Right ventricle myocardium inferior (tissue), 1 donor: ENCODE measurements at regions of chr2 and their contacts with region 1.

Region 1: DNA sequence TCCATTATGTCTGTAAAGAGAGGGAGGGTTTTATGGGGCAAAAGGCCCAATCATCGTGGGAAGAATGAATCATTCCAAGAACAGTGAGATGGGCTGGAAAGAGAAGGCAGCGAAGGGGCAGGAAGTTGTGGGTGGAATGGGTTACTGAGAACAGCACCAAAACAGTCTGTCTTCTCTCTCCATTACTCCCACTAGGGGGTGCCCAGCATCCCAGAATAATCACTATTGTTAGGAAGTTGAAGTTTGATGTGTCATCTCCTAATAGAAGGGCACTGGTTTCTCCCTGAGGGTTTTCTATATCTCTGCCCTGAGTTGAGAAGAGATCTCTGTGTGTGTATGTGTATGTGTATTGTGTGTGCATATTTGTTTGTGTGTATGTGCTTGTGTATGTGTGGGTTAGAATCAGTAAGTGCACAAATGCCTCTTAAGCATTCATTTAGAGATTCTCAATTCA is 76.6 kb upstream of the MAP4K3 start:
- DNase-seq: no peak
- ATAC-seq: peak; percentile 46

Region 2: GRCh38 chr2:39568561-39569006 is 54.9 kb after region 1 on chr2:
- intact Hi-C with region 1: no loop called
- DNase-seq: no peak
- ATAC-seq: no peak

Region 3: DNA sequence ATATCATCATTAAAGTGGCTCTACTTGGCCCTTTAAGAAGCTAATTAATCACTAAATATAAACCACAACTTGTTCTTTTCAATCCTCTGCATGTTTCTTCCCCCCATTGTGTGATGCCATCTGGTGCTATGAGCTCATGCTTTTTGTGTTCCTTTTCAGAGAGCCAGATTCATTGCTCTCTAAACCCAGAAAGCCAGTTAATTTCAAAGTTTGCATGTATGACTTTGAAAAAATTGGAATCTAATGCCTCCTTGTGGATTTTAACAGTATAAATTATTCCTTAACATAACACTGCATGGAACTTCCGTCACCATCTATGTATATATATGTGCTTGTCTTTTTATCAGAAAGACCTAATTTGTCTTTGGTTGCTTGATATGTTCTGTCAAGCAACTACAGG is 183.2 kb after region 1 on chr2:
- intact Hi-C with region 1: loop called (anchors 2 kb)
- DNase-seq: no peak
- ATAC-seq: peak; percentile 54

Region 4: GRCh38 chr2:39728941-39729351 is 215.3 kb after region 1 on chr2:
- intact Hi-C with region 1: loop called (anchors 10 kb)
- DNase-seq: peak; percentile 55
- ATAC-seq: no peak

Region 5: GRCh38 chr2:39920307-39920801 is 406.7 kb after region 1 on chr2:
- intact Hi-C with region 1: no loop called
- DNase-seq: no peak
- ATAC-seq: no peak